Head of caudate nucleus (tissue), 42 donors: ENCODE measurements at regions of chr5 and their contacts with region 1.

Region 1: DNA sequence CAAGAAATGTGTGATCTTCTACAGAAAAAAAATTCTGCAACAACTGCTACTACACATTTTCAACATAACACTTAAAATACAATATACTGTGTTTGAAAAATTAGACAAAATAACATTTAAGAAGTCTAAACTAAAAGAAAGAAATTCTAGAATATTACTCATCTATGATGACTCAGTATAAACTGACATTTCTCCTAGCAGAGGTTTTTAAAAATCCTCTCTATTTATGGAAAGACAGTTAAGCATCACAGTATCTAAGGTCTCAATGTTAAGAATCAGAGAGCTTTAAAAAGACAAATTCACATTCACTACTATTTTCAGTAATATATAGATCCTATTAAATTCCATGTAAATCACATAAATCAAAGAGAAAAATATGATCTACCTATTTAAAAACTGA is 61.3 kb downstream of the NR2F1-AS1 start:
- DNase-seq: no peak

Region 2: DNA sequence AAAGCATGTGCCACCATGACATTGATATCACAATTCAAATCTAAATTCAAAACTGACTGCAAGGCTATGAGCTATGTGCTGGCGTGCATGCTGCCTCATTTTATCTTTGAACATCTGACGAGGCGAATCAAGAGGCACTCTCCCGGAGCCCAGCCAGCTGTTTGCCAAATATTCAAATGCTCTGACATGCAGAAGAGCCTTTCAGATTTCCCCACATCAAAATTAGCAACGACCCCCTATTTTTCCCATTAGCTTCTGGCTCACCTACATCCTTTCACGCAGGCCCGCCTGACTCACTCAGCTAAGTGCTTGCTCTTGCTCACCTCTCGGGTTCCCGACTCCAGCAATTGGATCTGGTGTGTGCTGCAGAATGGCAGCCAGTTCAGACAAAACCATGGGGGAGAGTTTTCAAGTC is 97.7 kb before region 1 on chr5:
- intact Hi-C with region 1: loop called (anchors 10 kb)
- DNase-seq: peak; percentile 12 to 89 (median 57)

Region 3: GRCh38 chr5:94577466-94578245 is 1057.9 kb after region 1 on chr5:
- intact Hi-C with region 1: no loop called
- DNase-seq: no peak